ENCODE measurements at regions of chr12 and their contacts with region 1.

Region 1: DNA sequence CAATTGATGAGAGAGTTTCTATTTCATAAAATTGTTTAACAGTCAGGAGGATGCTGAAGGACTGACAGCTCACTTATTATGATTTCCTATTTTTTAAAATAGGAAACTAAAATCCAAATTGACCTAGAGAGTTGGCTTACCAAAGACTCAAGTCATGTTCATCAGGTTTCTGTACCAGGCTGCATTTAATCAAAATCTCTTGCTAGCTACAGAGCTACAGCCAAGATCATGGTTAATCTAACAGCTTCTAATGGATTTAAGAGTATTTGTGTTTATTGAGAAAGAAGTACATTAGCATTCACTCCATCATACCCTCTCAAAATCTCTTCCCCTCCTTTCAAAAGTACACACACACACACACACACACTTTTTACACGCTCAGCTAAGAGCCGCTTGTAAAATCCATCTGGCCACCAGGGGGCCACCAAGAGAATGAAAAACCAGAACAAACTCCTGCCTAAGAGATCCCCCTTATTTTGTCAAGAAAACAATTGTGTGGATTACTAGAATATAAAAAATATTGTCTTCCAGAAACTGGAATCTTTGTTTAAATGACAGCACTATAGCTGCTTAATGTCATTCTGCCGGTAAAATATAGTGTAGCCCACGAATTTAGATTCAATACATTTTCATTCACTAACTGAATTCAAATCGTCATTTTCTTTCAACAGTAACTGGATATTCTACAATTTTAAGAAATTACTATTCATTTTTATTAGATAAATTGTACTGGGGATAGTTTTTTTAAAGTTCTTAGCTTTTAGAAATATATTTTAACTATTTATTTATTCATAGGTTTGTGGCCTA is 334.0 kb downstream of the BTG1 start:
- DNase-seq: peak in 1 of 2 experiments; percentile 89
- H3K4me3 ChIP-seq: no peak overlapping the region
- H3K27ac ChIP-seq: no peak overlapping the region
- H3K4me1 ChIP-seq: no peaks in the 10 kb centered on the region
- H3K27me3 ChIP-seq: peaks cover 0 to 1% (median 0%) of the 10 kb centered on the region in 4 experiments; a peak in 1 of 7 replicates
- CTCF ChIP-seq: peak; percentile 14 to 59 (median 48)
- EP300 ChIP-seq: no peak
- POLR2A ChIP-seq: no peak
- RAD21 ChIP-seq: peak; percentile 69 to 73

Region 2: DNA sequence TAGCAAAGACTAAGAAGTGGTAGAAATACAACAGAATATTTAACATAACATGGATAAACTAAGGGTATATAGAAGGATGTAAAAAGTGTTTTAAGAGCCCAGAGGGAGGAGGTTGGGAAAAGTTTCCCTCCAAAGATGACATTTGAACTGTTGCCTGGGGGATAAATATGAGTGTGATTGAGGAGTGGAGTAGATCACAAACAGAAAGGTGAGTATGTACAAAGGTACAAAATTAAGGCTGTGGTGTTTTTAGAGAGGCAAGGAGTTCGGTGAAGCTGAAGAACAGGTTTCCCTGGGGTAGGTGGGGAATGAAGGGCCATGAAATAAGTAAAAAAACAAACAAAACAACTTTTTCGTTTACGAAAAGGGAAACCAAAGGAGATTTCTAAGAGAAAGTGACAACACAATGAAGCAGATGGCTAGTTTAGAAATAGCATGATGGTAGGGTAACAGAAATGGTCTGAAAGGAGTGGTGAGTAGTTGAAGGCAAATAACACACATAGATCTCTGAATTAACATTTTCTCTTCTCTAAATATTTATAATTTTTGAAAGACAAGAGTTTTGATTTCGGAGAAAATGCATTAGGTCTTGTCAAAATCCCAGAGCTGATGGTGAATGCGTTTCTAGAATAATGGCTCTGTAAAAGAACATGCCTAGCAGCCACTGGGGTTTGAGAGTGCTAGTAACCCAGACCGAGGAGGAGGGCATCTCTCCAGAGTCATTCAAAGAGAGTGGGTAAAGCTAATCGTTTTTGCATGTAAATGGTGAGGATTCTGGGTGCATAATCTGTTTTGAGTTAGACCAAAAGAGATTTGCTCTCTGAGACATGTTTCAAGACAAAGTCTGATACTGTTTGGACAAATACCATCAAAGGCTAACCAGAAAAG is 388.6 kb before region 1 on chr12:
- CTCF ChIA-PET with region 1: no interaction called
- POLR2A ChIA-PET with region 1: no interaction called
- DNase-seq: no peak
- H3K4me3 ChIP-seq: no peak overlapping the region
- H3K27ac ChIP-seq: no peak overlapping the region
- H3K4me1 ChIP-seq: peaks cover 0 to 7% (median 0%) of the 10 kb centered on the region in 4 experiments; a peak in 2 of 7 replicates
- H3K27me3 ChIP-seq: no peaks in the 10 kb centered on the region
- CTCF ChIP-seq: no peak
- EP300 ChIP-seq: no peak
- POLR2A ChIP-seq: no peak
- RAD21 ChIP-seq: no peak

Region 3: GRCh38 chr12:91801048-91801447 is 10.6 kb before region 1 on chr12:
- CTCF ChIA-PET with region 1: interaction called, 15 read pairs
- POLR2A ChIA-PET with region 1: no interaction called
- DNase-seq: no peak
- H3K4me3 ChIP-seq: no peak overlapping the region
- H3K27ac ChIP-seq: no peak overlapping the region
- H3K4me1 ChIP-seq: no peaks in the 10 kb centered on the region
- H3K27me3 ChIP-seq: no peaks in the 10 kb centered on the region
- CTCF ChIP-seq: no peak
- EP300 ChIP-seq: no peak
- POLR2A ChIP-seq: no peak
- RAD21 ChIP-seq: no peak

Region 4: DNA sequence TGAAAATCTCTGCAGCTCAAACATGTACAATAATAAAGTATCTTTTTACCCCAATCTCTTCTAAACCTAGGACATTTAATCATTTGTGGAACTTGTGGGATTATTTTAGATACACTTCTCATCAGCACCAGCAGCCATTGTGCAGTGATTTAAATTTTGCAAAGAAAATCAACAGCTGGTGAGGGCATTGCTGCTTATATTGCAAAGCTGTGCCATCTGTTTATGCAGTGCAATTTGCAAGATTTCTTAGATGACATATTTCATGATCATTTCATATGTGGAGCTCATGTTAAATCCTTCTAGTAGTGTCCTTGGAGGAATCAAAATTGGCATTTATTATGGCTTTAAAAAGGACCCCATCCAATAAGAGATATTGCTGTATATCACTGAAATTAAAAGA is 13.3 kb after region 1 on chr12:
- CTCF ChIA-PET with region 1: interaction called, 37 read pairs
- POLR2A ChIA-PET with region 1: no interaction called
- DNase-seq: no peak
- H3K4me3 ChIP-seq: no peak overlapping the region
- H3K27ac ChIP-seq: no peak overlapping the region
- H3K4me1 ChIP-seq: no peaks in the 10 kb centered on the region
- H3K27me3 ChIP-seq: no peaks in the 10 kb centered on the region
- CTCF ChIP-seq: no peak
- EP300 ChIP-seq: no peak
- POLR2A ChIP-seq: no peak
- RAD21 ChIP-seq: no peak

Region 5: GRCh38 chr12:91836696-91837095 is 25.0 kb after region 1 on chr12:
- CTCF ChIA-PET with region 1: no interaction called
- POLR2A ChIA-PET with region 1: no interaction called
- DNase-seq: no peak
- H3K4me3 ChIP-seq: no peak overlapping the region
- H3K27ac ChIP-seq: no peak overlapping the region
- H3K4me1 ChIP-seq: no peaks in the 10 kb centered on the region
- H3K27me3 ChIP-seq: no peaks in the 10 kb centered on the region
- CTCF ChIP-seq: no peak
- EP300 ChIP-seq: no peak
- POLR2A ChIP-seq: no peak
- RAD21 ChIP-seq: no peak

Measured in H1 (cell line).